ENCODE measurements at regions of chr11 and their contacts with region 1.

Region 1: DNA sequence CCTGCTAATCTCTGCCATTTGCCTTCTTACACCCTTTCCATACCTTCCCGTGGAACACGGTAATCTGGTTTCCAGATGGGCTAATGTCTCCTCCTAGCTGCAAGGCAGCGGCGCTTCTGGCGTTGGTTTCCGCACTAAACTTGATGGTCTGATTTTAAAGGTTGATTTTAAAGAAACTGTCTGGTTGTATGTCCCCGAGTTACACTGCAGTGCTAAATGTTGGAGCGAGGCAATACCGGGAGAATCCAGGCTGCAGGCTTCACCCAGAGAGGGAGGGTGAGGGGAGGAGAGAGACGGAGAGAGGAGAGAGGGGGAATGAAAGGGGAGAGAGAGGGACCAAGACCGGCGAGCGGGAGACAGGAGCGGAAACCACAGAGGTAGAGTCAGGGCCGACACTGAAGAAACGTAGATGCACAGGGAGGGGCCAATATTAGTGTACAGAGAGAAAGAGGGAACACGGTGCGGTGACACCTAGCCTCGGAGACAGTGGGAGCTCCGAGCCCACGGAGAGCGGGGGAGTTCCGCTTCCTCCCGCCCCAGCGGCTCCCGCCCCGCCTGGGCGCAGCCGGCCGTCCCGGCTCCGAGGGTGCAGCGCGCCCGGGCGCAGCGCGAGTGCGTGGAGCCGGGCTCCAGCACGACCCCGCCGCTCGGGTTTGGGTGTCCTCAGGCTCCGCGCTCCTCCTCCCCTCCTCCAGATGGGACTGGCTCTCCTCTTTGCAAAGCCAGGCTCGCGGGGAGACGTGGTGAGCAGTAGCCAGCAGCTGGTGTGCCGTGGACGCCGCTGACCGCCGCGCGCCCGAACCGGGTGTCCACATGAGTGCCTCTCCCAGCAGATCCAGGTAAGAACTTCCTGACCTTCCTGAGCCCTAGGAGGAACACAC is 71.9 kb upstream of the GRAMD1B start:
- DNase-seq: peak; percentile 72
- ATAC-seq: peak; percentile 92
- H3K4me3 Mint-ChIP-seq: peak overlapping the region; percentile 86
- H3K27ac Mint-ChIP-seq: peak overlapping the region; percentile 91
- H3K4me1 Mint-ChIP-seq: peaks cover 47% of the 10 kb centered on the region
- H3K27me3 Mint-ChIP-seq: peaks cover 21% of the 10 kb centered on the region

Region 2: GRCh38 chr11:123206791-123207434 is 151.3 kb before region 1 on chr11:
- CTCF ChIA-PET with region 1: no interaction called
- POLR2A ChIA-PET with region 1: no interaction called
- DNase-seq: no peak
- ATAC-seq: no peak
- H3K4me3 Mint-ChIP-seq: no peak overlapping the region
- H3K27ac Mint-ChIP-seq: no peak overlapping the region
- H3K4me1 Mint-ChIP-seq: no peaks in the 10 kb centered on the region
- H3K27me3 Mint-ChIP-seq: peaks cover 44% of the 10 kb centered on the region

Region 3: GRCh38 chr11:123301696-123302400 is 56.4 kb before region 1 on chr11:
- CTCF ChIA-PET with region 1: interaction called, 11 read pairs
- POLR2A ChIA-PET with region 1: no interaction called
- DNase-seq: peak; percentile 77
- ATAC-seq: peak; percentile 96
- H3K4me3 Mint-ChIP-seq: peak overlapping the region; percentile 44
- H3K27ac Mint-ChIP-seq: no peak overlapping the region
- H3K4me1 Mint-ChIP-seq: peaks cover 41% of the 10 kb centered on the region
- H3K27me3 Mint-ChIP-seq: peaks cover 3% of the 10 kb centered on the region

Region 4: GRCh38 chr11:123381817-123382554 is 23.8 kb after region 1 on chr11:
- CTCF ChIA-PET with region 1: interaction called, 11 read pairs
- POLR2A ChIA-PET with region 1: interaction called, 5 read pairs
- DNase-seq: peak; percentile 67
- ATAC-seq: peak; percentile 98
- H3K4me3 Mint-ChIP-seq: peak overlapping the region; percentile 54
- H3K27ac Mint-ChIP-seq: peak overlapping the region; percentile 76
- H3K4me1 Mint-ChIP-seq: peaks cover 31% of the 10 kb centered on the region
- H3K27me3 Mint-ChIP-seq: peaks cover 2% of the 10 kb centered on the region

Region 5: GRCh38 chr11:123429913-123430720 is 71.9 kb after region 1 on chr11 and contains the start of gene GRAMD1B:
- CTCF ChIA-PET with region 1: interaction called, 12 read pairs
- POLR2A ChIA-PET with region 1: no interaction called
- DNase-seq: peak; percentile 90
- ATAC-seq: peak; percentile 85
- H3K4me3 Mint-ChIP-seq: peak within 1 kb of the TSS; percentile 88
- H3K27ac Mint-ChIP-seq: peak within 1 kb of the TSS; percentile 96
- H3K4me1 Mint-ChIP-seq: peaks cover 47% of the 10 kb centered on the region
- H3K27me3 Mint-ChIP-seq: peaks cover 3% of the 10 kb centered on the region
- total RNA-seq, gene GRAMD1B: 22.8 to 26.0 TPM